Naive thymus-derived CD4-positive, alpha-beta T cell (primary cell): ENCODE measurements at regions of chr16 and their contacts with region 1.

Region 1: DNA sequence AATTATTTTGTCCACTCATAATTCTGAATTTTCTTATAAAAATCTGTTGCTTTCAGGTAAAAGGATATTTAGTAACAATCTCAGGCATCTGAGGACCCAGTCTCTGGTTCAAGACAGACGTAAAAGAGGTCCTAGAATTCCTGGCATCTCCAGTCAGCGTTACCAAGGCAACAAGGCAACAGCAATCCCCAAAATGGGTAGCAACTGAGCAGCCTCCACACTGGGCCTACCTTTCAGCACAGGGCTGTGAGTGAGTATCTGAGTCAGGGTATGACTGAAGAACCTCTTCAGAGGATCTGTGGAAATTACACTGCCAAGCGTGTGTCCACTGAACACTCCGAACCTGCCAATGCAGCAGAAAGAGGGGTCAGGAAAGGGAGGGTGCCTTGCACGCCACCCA is 20.8 kb downstream of the FANCA start:
- DNase-seq: no peak
- ATAC-seq: no peak
- H3K4me3 ChIP-seq: no peak overlapping the region
- H3K4me3 Mint-ChIP-seq: no peak overlapping the region
- H3K27ac ChIP-seq: no peak overlapping the region
- H3K27ac Mint-ChIP-seq: no peak overlapping the region
- H3K4me1 ChIP-seq: no peaks in the 10 kb centered on the region
- H3K4me1 Mint-ChIP-seq: peaks cover 3 to 12% (median 10%) of the 10 kb centered on the region in 7 donors
- H3K27me3 ChIP-seq: no peaks in the 10 kb centered on the region
- H3K27me3 Mint-ChIP-seq: no peaks in the 10 kb centered on the region

Region 2: GRCh38 chr16:89860747-89861304 is 65.2 kb after region 1 on chr16:
- CTCF ChIA-PET with region 1: interaction called, 16 read pairs
- POLR2A ChIA-PET with region 1: no interaction called
- intact Hi-C with region 1: loop called in 1 of 2 experiments (anchors 1 kb)
- DNase-seq: peak; percentile 61 to 85 (median 70)
- ATAC-seq: peak; percentile 91
- H3K4me3 ChIP-seq: no peak overlapping the region
- H3K4me3 Mint-ChIP-seq: peak overlapping the region in 5 of 10 donors; percentile 1 to 41 (median 26)
- H3K27ac ChIP-seq: no peak overlapping the region
- H3K27ac Mint-ChIP-seq: peak overlapping the region in 8 of 9 donors; percentile 39 to 83 (median 70)
- H3K4me1 ChIP-seq: peaks cover 27 to 32% of the 10 kb centered on the region in 2 donors
- H3K4me1 Mint-ChIP-seq: peaks cover 32 to 42% (median 34%) of the 10 kb centered on the region in 7 donors
- H3K27me3 ChIP-seq: no peaks in the 10 kb centered on the region
- H3K27me3 Mint-ChIP-seq: no peaks in the 10 kb centered on the region